ENCODE measurements at regions of chr2 and their contacts with region 1.

Region 1: GRCh38 chr2:53859206-53860181 is at the start of gene GPR75:
- DNase-seq: no peak
- H3K4me3 ChIP-seq: peak within 1 kb of the TSS; percentile 46
- H3K27ac ChIP-seq: no peak within 1 kb of the TSS
- H3K27me3 ChIP-seq: no peaks in the 10 kb centered on the region
- CTCF ChIP-seq: no peak
- polyA plus RNA-seq, gene GPR75: 1.8 and 2.0 TPM in 2 replicates

Region 2: DNA sequence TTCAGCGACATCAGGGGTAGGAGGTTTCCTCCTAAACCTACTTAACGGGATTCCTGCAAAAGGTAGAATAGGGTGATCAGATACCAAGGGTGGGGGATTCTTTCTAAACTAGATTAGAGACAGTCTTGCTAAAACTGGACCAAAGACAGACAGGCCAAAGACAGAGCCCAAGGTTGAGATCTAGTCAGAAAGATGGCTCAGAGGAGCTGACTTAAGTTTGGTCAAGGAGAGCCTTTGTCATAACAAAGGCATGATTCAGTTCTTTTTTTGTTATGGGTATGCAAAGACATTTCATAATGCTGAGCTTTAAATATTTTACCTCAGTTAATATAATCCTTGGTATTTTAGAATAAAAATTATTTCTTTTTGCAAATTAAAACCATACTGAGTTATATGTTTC is 18.1 kb after region 1 on chr2:
- CTCF ChIA-PET with region 1: interaction called, 4 read pairs
- POLR2A ChIA-PET with region 1: interaction called, 12 read pairs
- DNase-seq: no peak
- H3K4me3 ChIP-seq: no peak overlapping the region
- H3K27ac ChIP-seq: no peak overlapping the region
- H3K27me3 ChIP-seq: no peaks in the 10 kb centered on the region
- CTCF ChIP-seq: no peak

Region 3: DNA sequence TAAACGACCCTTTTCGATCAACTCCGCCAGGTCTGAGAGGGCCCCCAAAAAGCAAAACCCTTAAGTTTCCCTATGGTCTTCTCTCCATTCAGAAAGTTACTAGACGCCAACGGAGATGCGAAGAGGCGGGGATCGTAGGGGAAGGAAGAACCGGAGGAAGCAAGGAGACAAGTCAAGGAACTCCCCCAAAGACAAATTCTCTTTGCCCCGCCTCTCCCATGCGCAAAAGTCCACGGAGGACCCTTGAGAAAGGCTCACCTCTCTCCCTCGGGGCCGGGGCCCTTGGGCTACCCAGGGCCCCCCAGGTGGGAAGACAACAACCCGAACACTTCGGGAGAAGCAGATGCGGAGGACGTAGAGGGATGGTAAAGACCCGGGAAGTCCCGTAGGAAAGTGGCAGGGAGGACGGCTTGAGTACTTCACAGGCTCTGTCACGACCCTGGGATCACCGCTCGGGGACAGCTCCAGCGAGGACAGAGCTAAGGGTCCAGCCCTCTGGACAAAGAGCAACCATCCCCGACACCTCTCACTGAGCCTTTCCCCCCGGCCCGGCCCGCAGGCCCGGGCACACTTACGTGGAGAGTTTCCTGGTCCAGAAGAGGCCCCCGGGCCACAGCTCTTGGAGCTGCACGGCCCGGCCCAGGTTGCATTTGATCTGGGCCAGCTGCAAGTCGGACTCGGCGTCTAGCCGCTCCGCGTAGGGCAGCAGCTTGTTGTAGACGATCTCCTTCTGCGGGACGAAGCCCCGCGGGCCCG is 110.7 kb after region 1 on chr2:
- CTCF ChIA-PET with region 1: no interaction called
- POLR2A ChIA-PET with region 1: interaction called, 12 read pairs
- DNase-seq: no peak
- H3K4me3 ChIP-seq: peak overlapping the region; percentile 94
- H3K27ac ChIP-seq: peak overlapping the region; percentile 90
- H3K27me3 ChIP-seq: no peaks in the 10 kb centered on the region
- CTCF ChIP-seq: no peak

Measured in AG04450 (cell line).